Activated naive CD4-positive, alpha-beta T cell treated with anti-CD3 and anti-CD28 coated beads for 36 hours (primary cell): ENCODE measurements at regions of chr17 and their contacts with region 1.

Region 1: DNA sequence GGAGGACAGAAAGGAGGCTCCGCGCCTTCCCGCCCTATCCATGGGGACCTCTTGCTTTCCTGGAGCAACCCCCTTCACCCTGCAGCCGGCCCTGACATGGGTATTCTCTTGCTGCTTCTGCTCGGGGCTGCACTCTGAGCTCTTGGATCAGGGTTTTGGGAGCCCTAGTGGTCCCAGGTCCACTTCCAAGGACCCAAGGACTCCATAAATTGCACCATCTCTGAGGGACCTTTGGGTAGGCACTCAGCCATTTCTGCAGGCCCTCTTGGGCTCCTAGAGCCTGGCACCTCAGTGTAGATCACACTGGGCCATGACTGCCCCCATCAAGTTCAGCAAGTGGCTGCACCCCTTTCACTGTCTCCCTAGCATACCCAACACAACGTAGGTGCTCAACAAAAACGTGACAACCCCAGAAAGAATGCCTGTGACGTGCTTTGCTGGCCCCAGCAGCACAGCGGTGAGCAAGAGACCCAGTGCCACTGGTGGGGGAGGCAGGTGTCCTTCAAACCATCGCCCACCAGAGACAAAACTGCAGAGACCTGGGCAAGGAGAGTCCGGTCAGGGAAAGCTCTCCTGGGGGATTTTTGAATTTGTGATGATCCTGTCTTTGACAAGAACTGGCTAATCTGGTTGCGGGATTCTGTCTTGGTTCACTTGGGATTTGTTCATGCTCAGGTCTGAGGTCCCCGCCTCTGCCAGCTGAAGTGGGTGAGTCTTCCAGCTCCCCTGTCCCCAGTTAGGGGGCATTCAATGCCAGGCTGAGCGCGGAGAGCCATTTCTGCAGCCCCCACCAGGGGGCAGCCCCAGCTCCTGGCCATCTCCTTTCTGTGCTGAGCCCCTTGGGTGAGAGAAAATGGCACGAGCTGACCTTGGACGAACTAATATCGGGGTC is 2.5 kb upstream of the RAB11FIP4 start:
- DNase-seq: peak; percentile 51
- H3K4me3 Mint-ChIP-seq: no peak overlapping the region
- H3K27ac Mint-ChIP-seq: no peak overlapping the region
- H3K4me1 Mint-ChIP-seq: peaks cover 3% of the 10 kb centered on the region
- H3K27me3 Mint-ChIP-seq: peaks cover 35% of the 10 kb centered on the region

Region 2: DNA sequence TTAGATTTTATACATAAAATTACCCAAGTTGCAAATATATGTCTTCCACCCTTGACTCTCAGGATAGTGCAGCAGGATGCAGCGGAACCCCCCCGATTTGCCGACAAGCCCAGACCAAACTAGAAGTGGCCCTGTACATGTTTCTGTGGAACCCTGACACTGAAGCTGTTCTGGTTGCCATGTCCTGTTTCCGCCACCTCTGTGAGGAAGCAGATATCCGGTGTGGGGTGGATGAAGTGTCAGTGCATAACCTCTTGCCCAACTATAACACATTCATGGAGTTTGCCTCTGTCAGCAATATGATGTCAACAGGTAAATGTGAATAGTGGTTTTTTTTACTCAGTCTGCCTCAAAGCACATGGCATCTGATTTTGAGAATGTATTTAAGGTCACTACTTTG is 162.6 kb before region 1 on chr17:
- CTCF ChIA-PET with region 1: no interaction called
- intact Hi-C with region 1: no loop called
- DNase-seq: no peak
- H3K4me3 Mint-ChIP-seq: no peak overlapping the region
- H3K27ac Mint-ChIP-seq: no peak overlapping the region
- H3K4me1 Mint-ChIP-seq: peaks cover 3% of the 10 kb centered on the region
- H3K27me3 Mint-ChIP-seq: no peaks in the 10 kb centered on the region

Region 3: GRCh38 chr17:31524926-31525800 is 136.1 kb after region 1 on chr17:
- CTCF ChIA-PET with region 1: interaction called, 16 read pairs
- intact Hi-C with region 1: loop called (anchors 1 kb)
- DNase-seq: peak; percentile 91
- H3K4me3 Mint-ChIP-seq: no peak overlapping the region
- H3K27ac Mint-ChIP-seq: no peak overlapping the region
- H3K4me1 Mint-ChIP-seq: no peaks in the 10 kb centered on the region
- H3K27me3 Mint-ChIP-seq: no peaks in the 10 kb centered on the region